RWPE1 (cell line): ENCODE measurements at regions of chr7 and their contacts with region 1.

Region 1: DNA sequence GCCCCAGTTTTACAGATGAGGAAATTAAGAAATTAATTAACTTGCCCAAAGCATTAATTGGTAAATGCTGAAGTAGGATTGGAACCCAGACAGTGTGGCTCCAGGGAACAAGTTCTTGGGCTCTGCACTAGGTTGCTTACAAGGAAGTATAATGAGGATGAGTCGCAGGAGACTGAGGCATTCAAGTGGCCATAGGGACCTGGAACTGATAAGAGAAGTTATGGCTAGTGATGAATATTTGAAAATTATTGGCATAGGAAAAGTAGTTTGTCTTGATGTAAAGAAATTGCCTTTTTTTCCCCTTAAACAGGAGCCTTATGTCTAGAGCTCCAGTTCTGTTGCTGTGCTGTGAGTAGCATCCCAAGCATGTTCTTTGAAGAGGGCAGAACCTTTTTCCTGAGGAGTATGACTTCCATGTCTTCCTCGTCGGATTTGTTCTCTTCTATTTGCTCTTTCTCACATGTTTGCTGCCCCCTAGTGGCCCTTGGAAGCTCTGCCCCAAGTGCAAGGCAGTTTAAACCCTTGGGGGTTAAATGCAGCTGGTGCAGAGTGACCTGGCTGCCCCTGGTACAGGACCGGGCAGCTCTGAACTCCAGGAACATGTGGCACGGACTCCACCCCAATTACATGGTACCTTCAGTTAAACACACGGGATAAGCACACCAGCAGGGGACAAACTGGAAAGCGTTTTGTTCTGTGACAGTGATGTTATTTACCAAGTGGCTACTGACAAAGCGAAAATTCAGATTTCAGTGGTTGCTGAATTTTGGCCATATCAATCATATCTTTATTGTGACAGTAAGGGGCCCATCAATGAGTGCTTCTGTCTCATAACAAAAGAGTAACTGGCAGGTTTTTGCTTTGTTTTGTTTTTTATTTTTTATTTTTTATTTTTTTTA is 148.8 kb downstream of the HECW1 start:
- DNase-seq: peak; percentile 63
- H3K27ac ChIP-seq: no peak overlapping the region
- CTCF ChIP-seq: peak; percentile 97

Region 2: GRCh38 chr7:42940985-42941847 is 320.0 kb before region 1 on chr7:
- CTCF ChIA-PET with region 1: interaction called, 19 read pairs
- POLR2A ChIA-PET with region 1: no interaction called
- DNase-seq: peak; percentile 71
- H3K27ac ChIP-seq: no peak overlapping the region
- CTCF ChIP-seq: peak; percentile 97

Region 3: GRCh38 chr7:43170571-43170970 is 90.7 kb before region 1 on chr7:
- CTCF ChIA-PET with region 1: no interaction called
- POLR2A ChIA-PET with region 1: no interaction called
- DNase-seq: no peak
- H3K27ac ChIP-seq: no peak overlapping the region
- CTCF ChIP-seq: no peak